Transverse colon (tissue), 4 donors: ENCODE measurements at regions of chr18 and their contacts with region 1.

Region 1: GRCh38 chr18:7980136-7980535 is 413.0 kb downstream of the PTPRM start:
- DNase-seq: no peak
- H3K4me3 ChIP-seq: no peak overlapping the region
- H3K27ac ChIP-seq: no peak overlapping the region
- H3K4me1 ChIP-seq: no peaks in the 10 kb centered on the region
- H3K27me3 ChIP-seq: no peaks in the 10 kb centered on the region
- CTCF ChIP-seq: peak in 2 of 5 experiments; percentile 8 to 14
- EP300 ChIP-seq: no peak
- POLR2A ChIP-seq: no peak

Region 2: DNA sequence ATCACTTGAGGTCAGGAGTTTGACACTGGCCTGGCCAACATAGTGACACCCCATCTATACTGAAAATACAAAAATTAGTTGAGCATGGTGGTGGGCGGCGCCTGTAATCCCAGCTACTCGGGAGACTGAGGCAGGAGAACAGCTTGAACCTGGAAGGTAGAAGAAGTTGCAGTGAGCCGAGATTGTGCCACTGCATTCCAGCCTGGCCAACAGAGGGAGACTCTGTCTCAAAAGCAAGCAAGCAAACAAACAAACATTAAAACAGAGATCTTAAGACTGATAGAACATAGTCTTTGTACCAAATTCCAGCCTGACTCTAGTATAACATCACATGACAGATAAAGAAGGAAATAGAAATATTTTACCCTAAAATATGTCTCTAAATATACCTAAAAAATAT is 244.9 kb before region 1 on chr18:
- in situ Hi-C with region 1: no loop called
- intact Hi-C with region 1: no loop called
- DNase-seq: no peak
- H3K4me3 ChIP-seq: no peak overlapping the region
- H3K27ac ChIP-seq: no peak overlapping the region
- H3K4me1 ChIP-seq: no peaks in the 10 kb centered on the region
- H3K27me3 ChIP-seq: no peaks in the 10 kb centered on the region
- CTCF ChIP-seq: peak in 1 of 5 experiments; percentile 10
- EP300 ChIP-seq: no peak
- POLR2A ChIP-seq: no peak

Region 3: GRCh38 chr18:8084160-8084559 is 104.0 kb after region 1 on chr18:
- in situ Hi-C with region 1: loop called in 1 of 4 experiments (anchors 25 kb)
- intact Hi-C with region 1: no loop called
- DNase-seq: no peak
- H3K4me3 ChIP-seq: no peak overlapping the region
- H3K27ac ChIP-seq: no peak overlapping the region
- H3K4me1 ChIP-seq: no peaks in the 10 kb centered on the region
- H3K27me3 ChIP-seq: no peaks in the 10 kb centered on the region
- CTCF ChIP-seq: peak in 2 of 5 experiments; percentile 27 to 36
- EP300 ChIP-seq: no peak
- POLR2A ChIP-seq: no peak